ENCODE measurements at regions of chr3 and their contacts with region 1.

Region 1: DNA sequence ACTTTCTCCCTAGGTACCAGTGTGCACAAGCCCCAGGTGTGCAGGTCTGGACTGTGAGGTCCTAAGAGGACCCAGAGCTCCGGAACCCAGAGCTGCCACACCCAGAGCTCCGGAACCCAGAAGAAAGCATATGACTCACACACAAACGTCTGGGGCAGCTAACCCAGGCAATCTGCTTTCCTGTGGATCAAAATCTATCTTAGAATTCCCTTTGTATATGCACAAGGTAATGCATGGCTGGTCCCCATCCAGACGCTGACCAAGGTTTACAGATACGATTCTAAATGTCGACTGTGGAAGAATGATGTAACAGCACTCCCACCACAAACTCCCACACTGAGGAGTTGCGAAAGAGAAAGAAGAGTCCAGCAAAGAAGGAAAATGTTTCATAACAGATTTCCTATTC is 15.7 kb downstream of the KCNMB2 start:
- DNase-seq: no peak
- ATAC-seq: no peak
- H3K4me3 ChIP-seq: no peak overlapping the region
- H3K27ac ChIP-seq: no peak overlapping the region
- H3K4me1 ChIP-seq: no peaks in the 10 kb centered on the region
- H3K27me3 ChIP-seq: no peaks in the 10 kb centered on the region
- CTCF ChIP-seq: no peak

Region 2: GRCh38 chr3:178422406-178422805 is 129.5 kb before region 1 on chr3:
- CTCF ChIA-PET with region 1: no interaction called
- POLR2A ChIA-PET with region 1: no interaction called
- in situ Hi-C with region 1: no loop called
- intact Hi-C with region 1: no loop called
- DNase-seq: no peak
- ATAC-seq: no peak
- H3K4me3 ChIP-seq: no peak overlapping the region
- H3K27ac ChIP-seq: no peak overlapping the region
- H3K4me1 ChIP-seq: no peaks in the 10 kb centered on the region
- H3K27me3 ChIP-seq: no peaks in the 10 kb centered on the region
- CTCF ChIP-seq: no peak; the same call in 1 of the 2 replicates

Region 3: GRCh38 chr3:179995406-179995805 is 1443.5 kb after region 1 on chr3:
- CTCF ChIA-PET with region 1: no interaction called
- POLR2A ChIA-PET with region 1: interaction called, 14 read pairs
- in situ Hi-C with region 1: no loop called
- intact Hi-C with region 1: no loop called
- DNase-seq: no peak
- ATAC-seq: no peak
- H3K4me3 ChIP-seq: no peak overlapping the region
- H3K27ac ChIP-seq: no peak overlapping the region
- H3K4me1 ChIP-seq: no peaks in the 10 kb centered on the region
- H3K27me3 ChIP-seq: no peaks in the 10 kb centered on the region
- CTCF ChIP-seq: no peak

Measured in Panc1 (cell line).